Activated CD4-positive, alpha-beta T cell treated with anti-CD3 and anti-CD28 coated beads for 36 hours (primary cell): ENCODE measurements at regions of chr17 and their contacts with region 1.

Region 1: DNA sequence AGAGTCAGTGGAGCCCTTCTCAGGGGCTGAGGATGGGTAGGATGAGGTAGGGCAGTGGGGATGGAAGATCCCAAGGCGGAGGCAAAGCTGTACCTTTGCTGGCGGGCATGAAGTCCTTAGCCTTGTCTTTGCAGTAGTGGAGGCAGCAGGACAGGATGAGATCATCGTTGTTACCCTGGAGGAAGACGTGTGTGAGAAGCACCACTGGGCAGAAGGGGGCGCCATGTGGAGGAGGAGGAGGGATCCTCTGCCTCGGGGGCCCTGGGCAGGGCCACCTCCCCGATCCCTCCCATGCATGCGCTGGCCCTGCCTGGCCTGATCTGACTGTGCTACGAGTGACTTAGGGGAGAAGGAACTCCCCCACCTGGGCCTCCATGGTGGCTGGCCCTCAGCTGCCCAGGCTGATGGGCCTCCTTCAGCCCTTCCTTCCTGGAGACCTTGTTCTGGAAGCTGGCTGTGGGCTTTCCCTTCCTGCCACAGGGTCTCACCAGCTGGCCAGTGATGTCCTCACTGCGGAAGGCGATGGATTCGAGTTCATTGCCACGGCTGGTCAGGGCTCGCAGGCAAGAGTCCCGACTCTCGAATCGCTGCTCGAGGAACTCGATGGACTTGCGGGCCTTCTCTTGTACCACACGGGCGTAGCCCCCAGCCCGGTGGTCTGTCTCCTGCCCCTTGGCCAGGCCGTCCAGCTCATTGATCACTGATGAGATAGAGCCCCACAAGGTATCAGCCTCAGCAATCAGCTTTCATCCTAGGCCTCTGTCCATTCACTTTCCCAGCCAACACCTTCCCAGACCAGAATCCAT is 10.3 kb downstream of the HIC1 start:
- DNase-seq: peak; percentile 89
- ATAC-seq: peak; percentile 83
- H3K4me3 Mint-ChIP-seq: no peak overlapping the region
- H3K27ac Mint-ChIP-seq: no peak overlapping the region
- H3K4me1 Mint-ChIP-seq: peaks cover 20% of the 10 kb centered on the region
- H3K27me3 Mint-ChIP-seq: peaks cover 5% of the 10 kb centered on the region

Region 2: DNA sequence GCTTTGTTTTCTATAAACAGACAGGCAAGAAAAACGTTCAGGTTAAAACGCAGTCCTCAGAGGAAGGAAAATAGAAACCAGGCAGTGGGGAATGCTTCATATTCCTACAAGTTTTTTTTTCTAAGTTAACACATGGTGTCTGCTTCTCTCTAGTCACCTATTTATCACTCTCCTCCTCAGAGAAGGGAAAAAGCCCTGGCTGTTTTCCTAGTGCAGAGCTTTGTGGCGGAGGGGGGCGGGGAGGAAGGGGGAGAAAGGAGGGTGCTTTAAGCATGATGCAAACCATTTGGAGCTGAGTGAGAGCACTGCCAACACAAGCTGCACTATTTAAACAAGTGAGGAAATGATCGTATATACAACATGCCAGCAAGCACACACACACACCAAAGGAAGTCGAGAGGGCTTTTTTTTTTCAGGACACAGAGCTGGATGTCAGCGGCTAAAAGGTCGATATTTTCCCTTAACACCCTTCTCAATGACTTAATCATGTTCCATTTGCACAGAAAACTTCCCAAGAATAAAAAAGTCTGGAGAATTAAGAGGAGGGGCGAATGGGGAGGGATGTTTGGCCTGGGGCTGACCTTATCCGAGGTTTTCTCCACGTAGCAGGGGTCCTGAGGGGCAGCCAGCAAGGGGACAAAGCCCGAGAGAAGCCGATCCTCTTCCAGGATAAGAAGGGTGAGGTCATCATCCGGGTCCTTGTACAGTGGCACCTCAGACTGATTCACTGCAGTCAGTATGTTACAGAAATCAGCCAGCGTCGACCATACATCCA is 107.1 kb after region 1 on chr17:
- CTCF ChIA-PET with region 1: no interaction called
- POLR2A ChIA-PET with region 1: no interaction called
- intact Hi-C with region 1: loop called in 1 of 2 experiments (anchors 2 kb)
- DNase-seq: no peak
- ATAC-seq: no peak
- H3K4me3 Mint-ChIP-seq: no peak overlapping the region
- H3K27ac Mint-ChIP-seq: no peak overlapping the region
- H3K4me1 Mint-ChIP-seq: no peaks in the 10 kb centered on the region
- H3K27me3 Mint-ChIP-seq: no peaks in the 10 kb centered on the region